ENCODE measurements at regions of chr4 and their contacts with region 1.

Region 1: GRCh38 chr4:9762823-9763475 is 18.5 kb upstream of the DRD5 start:
- DNase-seq: peak; percentile 52 to 61
- H3K4me3 ChIP-seq: no peak overlapping the region
- H3K4me1 ChIP-seq: no peaks in the 10 kb centered on the region
- H3K27me3 ChIP-seq: no peaks in the 10 kb centered on the region

Region 2: DNA sequence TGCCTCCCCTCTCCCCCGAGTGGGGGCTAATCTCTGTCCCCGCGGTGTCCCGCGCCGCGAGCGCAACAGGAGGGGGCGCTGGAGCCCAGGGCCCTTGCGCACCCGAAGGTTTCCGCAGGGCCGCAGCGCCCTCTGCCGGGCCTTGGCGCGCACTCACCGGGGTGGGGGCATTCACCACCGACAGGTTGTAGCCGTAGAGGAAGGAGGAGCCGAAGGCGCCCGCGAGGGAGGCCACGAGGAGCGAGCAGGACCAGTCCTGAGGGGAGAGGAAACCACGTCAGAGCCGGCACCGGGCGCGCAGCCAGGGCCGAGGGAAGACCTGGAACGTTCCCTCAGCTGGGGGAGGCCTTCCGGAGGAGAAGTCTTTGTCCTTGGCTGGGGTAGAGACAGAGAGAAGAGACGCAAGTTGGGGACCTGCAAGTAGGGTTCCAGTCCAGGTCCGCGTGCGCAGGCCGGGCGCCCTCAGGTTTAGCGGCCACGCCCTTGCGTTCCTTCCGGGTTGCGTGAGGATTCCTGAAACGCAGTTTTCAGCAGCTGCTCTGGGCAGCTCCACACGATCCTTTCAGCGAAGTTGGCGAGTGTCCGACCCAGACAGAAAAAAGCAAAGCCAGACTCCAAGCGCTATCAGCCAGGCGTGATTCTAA is 256.0 kb after region 1 on chr4:
- in situ Hi-C with region 1: loop called (anchors 10 kb)
- DNase-seq: peak; percentile 46 to 91
- H3K4me3 ChIP-seq: peak overlapping the region; percentile 23
- H3K4me1 ChIP-seq: no peaks in the 10 kb centered on the region
- H3K27me3 ChIP-seq: no peaks in the 10 kb centered on the region

Region 3: DNA sequence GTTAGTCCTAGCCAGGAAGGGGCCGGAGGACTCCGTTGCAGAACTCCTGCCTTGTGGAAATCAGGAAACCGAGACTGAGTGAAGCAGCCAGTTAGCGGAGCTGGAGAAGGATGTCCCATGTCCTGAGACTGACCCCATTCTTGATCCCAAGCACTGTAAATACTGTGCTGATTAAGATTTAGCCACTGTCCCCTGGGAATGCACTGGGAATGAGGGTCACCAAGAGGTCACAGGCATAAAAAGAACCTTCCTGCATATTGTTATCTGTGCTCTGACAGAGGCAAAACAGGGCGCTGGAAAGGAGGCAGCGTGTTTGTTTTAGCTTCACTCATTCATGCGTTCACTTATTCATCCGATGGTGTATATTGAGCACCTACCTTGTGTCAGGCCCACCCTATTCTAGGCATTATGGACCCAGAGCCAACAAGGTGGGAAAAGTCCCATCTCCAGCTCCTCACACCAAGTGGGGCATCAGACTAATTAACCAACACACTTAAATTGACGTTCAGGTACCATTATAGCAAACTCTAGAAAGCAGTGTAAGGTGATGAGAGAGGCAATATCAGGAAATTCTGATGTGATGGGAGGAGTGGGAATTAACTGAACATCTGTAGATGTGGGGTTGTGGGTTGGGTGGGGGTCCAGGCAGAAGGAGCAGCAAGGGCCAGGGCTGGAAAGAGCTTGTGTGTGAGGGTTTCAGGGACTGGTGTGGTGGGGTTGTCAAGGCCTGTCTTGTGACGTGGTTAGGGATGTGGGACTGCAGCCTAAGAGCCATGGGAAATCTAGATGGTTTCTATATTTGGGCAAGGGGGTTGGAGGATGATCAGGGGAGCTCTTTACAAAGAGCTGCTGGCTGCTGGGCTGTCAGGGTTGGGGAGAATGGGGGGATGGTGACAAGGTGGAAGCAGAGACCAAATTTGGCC is 269.0 kb after region 1 on chr4:
- in situ Hi-C with region 1: no loop called
- DNase-seq: peak; percentile 8 to 48
- H3K4me3 ChIP-seq: no peak overlapping the region
- H3K4me1 ChIP-seq: no peaks in the 10 kb centered on the region; the same call in 1 of the 2 replicates
- H3K27me3 ChIP-seq: no peaks in the 10 kb centered on the region